K562 (cell line): ENCODE measurements at regions of chr17 and their contacts with region 1.

Region 1: DNA sequence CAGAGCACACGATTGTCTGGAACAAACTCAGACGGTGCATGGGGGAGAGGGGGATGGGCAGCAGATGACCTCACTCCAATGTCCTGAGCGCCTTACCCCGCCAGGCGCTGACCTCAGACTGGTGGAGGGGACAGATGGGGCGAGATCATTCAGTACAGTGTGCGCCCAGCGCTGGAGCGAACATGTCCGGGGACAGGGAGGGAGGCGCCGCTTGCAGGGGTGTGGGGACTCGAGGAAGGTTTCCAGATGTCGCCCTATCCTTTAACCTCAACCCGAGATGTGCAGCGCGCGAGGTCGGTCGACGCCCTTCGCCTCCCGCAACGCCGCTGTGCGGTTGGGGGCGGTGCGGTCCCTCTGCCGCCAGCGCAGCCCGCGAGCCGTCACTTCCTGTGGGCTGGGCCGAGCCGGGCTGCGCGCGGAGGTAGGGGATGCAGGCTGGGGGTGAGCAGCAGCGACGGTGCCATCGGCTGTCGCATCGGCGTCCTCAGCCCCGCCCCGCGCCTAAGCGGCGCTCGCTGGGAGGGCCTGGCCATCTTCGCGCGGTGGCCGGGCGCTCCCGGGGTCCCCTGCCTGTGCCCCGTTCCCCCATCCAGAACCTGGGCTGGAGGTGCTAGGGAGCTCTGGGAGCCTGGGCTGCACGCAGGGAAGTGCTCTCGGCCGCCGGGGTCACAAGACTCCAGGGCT is 5.3 kb upstream of the CDR2L start:
- DNase-seq: peak; percentile 88 to 90 (median 88)
- ATAC-seq: peak; percentile 96
- H3K4me3 ChIP-seq: peak overlapping the region; percentile 55
- H3K27ac ChIP-seq: peak overlapping the region; percentile 75
- H3K4me1 ChIP-seq: peaks cover 22 to 40% of the 10 kb centered on the region in 2 experiments
- H3K27me3 ChIP-seq: no peaks in the 10 kb centered on the region
- CTCF ChIP-seq: peak; percentile 8 to 39 (median 13); a peak in 1 of 6 replicates
- EP300 ChIP-seq: no peak
- POLR2A ChIP-seq: peak; percentile 88
- RAD21 ChIP-seq: peak in 1 of 2 experiments; percentile 16; a peak in 1 of 4 replicates

Region 2: DNA sequence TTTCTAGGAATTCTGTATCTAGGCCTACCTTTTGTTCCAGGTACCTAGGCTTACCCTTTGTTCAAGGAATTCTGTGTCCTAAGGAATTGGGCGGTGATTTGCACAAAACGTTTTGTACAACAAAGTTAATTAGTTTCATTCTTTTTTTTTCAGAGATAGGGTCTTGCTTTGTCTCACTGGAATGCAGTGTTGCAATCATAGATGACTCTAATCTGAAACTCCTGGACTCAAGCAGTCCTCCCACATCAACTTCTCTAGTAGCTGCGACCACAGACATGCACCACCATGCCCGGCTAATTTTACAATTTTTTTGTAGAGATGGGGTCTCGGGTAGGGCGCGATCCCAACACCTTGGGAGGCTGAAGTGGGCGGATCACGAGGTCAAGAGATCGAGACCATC is 12.4 kb after region 1 on chr17:
- CTCF ChIA-PET with region 1: no interaction called
- POLR2A ChIA-PET with region 1: interaction called, 56 read pairs
- in situ Hi-C with region 1: no loop called
- intact Hi-C with region 1: no loop called
- DNase-seq: no peak
- ATAC-seq: no peak
- H3K4me3 ChIP-seq: no peak overlapping the region
- H3K27ac ChIP-seq: no peak overlapping the region
- H3K4me1 ChIP-seq: peaks cover 0 to 15% of the 10 kb centered on the region in 2 experiments; a peak in 3 of 5 replicates
- H3K27me3 ChIP-seq: no peaks in the 10 kb centered on the region
- CTCF ChIP-seq: no peak
- EP300 ChIP-seq: no peak
- POLR2A ChIP-seq: no peak
- RAD21 ChIP-seq: no peak

Region 3: GRCh38 chr17:75059369-75060345 is 77.5 kb after region 1 on chr17:
- CTCF ChIA-PET with region 1: no interaction called
- POLR2A ChIA-PET with region 1: no interaction called
- in situ Hi-C with region 1: no loop called
- intact Hi-C with region 1: no loop called
- DNase-seq: peak in 2 of 4 experiments; percentile 17 to 60
- ATAC-seq: peak; percentile 89
- H3K4me3 ChIP-seq: no peak overlapping the region
- H3K27ac ChIP-seq: peak overlapping the region; percentile 53; the same call in 2 of the 3 replicates
- H3K4me1 ChIP-seq: peaks cover 0 to 3% of the 10 kb centered on the region in 2 experiments; a peak in 2 of 5 replicates
- H3K27me3 ChIP-seq: no peaks in the 10 kb centered on the region
- CTCF ChIP-seq: peak; percentile 46 to 72 (median 57); a peak in 5 of 6 replicates
- EP300 ChIP-seq: no peak
- POLR2A ChIP-seq: no peak
- RAD21 ChIP-seq: peak; percentile 63 to 83